Endothelial cell of umbilical vein (primary cell): ENCODE measurements at regions of chr7 and their contacts with region 1.

Region 1: GRCh38 chr7:54788664-54789063 is 29.7 kb upstream of the SEC61G start:
- DNase-seq: peak; percentile 78
- H3K4me3 ChIP-seq: no peak overlapping the region
- H3K27ac ChIP-seq: no peak overlapping the region
- H3K4me1 ChIP-seq: no peaks in the 10 kb centered on the region
- H3K27me3 ChIP-seq: peaks cover 9 to 23% of the 10 kb centered on the region in 2 experiments
- CTCF ChIP-seq: peak; percentile 58 to 64
- POLR2A ChIP-seq: no peak

Region 2: GRCh38 chr7:54811041-54811845 is 22.6 kb after region 1 on chr7:
- CTCF ChIA-PET with region 1: interaction called, 3 read pairs
- POLR2A ChIA-PET with region 1: no interaction called
- dilution Hi-C with region 1: no loop called
- intact Hi-C with region 1: loop called (anchors 1 kb)
- DNase-seq: peak; percentile 78
- H3K4me3 ChIP-seq: peak overlapping the region in 1 of 3 experiments; percentile 12
- H3K27ac ChIP-seq: no peak overlapping the region
- H3K4me1 ChIP-seq: peaks cover 22% of the 10 kb centered on the region
- H3K27me3 ChIP-seq: peaks cover 12 to 14% of the 10 kb centered on the region in 2 experiments
- CTCF ChIP-seq: no peak
- POLR2A ChIP-seq: no peak

Region 3: GRCh38 chr7:54839538-54840213 is 51.0 kb after region 1 on chr7:
- CTCF ChIA-PET with region 1: interaction called, 49 read pairs
- POLR2A ChIA-PET with region 1: no interaction called
- dilution Hi-C with region 1: no loop called
- intact Hi-C with region 1: loop called (anchors 1 kb)
- DNase-seq: peak; percentile 43
- H3K4me3 ChIP-seq: no peak overlapping the region
- H3K27ac ChIP-seq: no peak overlapping the region
- H3K4me1 ChIP-seq: no peaks in the 10 kb centered on the region
- H3K27me3 ChIP-seq: peaks cover 10% of the 10 kb centered on the region in 2 experiments
- CTCF ChIP-seq: peak; percentile 68 to 78
- POLR2A ChIP-seq: no peak

Region 4: GRCh38 chr7:55018361-55019190 is 229.9 kb after region 1 on chr7 and contains the start of gene EGFR:
- CTCF ChIA-PET with region 1: interaction called, 10 read pairs
- POLR2A ChIA-PET with region 1: no interaction called
- dilution Hi-C with region 1: no loop called
- intact Hi-C with region 1: loop called (anchors 10 kb)
- DNase-seq: peak; percentile 64
- H3K4me3 ChIP-seq: peak within 1 kb of the TSS; percentile 69 to 84 (median 74)
- H3K27ac ChIP-seq: peak within 1 kb of the TSS; percentile 40
- H3K4me1 ChIP-seq: peaks cover 10% of the 10 kb centered on the region
- H3K27me3 ChIP-seq: peaks cover 17 to 29% of the 10 kb centered on the region in 2 experiments
- CTCF ChIP-seq: no peak
- POLR2A ChIP-seq: no peak
- total RNA-seq, gene EGFR: 4.1 and 5.0 TPM in 2 replicates

Region 5: GRCh38 chr7:55250313-55250712 is 461.6 kb after region 1 on chr7:
- CTCF ChIA-PET with region 1: interaction called, 406 read pairs
- POLR2A ChIA-PET with region 1: no interaction called
- dilution Hi-C with region 1: no loop called
- intact Hi-C with region 1: loop called (anchors 1 kb)
- DNase-seq: peak; percentile 27
- H3K4me3 ChIP-seq: no peak overlapping the region
- H3K27ac ChIP-seq: no peak overlapping the region
- H3K4me1 ChIP-seq: peaks cover 8% of the 10 kb centered on the region
- H3K27me3 ChIP-seq: peaks cover 27 to 33% of the 10 kb centered on the region in 2 experiments
- CTCF ChIP-seq: peak; percentile 73 to 75
- POLR2A ChIP-seq: no peak

Region 6: DNA sequence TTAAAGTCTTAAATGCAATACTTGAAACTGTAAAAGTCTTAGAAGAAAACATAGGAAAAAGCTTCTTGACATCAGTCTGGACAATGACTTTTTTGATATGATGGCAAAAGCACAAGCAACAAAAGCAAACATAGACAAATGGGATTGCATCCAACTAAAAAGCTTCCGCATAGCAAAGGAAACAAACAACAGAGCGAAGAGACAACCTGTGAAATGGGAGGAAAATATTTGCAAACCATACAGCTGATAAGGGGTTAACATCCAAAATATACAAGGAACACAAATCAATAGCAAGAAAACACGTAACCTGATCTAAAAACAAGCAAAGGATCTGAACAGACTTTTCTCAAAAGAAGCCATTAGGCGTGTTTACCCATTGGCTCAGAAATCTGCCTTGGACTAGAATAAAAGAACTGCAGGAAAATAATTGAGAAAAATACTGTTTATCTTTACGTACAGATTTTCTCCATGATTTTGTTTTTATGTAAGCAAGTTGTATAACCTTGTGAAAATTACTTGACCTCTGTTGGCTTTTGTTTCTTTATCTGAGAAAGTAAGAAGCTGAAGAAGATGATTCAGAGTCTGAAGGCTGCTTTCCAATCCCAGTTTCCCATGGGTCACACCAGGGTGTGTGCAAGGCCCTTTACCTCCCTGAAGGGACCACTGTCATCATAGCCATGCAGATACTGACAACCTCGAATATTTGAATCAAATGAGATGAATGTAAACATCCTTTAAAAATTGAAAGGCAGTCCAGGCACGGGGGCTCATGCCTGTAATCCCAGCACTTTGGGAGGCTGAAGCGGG is 477.4 kb after region 1 on chr7:
- CTCF ChIA-PET with region 1: interaction called, 17 read pairs
- POLR2A ChIA-PET with region 1: no interaction called
- dilution Hi-C with region 1: no loop called
- intact Hi-C with region 1: no loop called
- DNase-seq: no peak
- H3K4me3 ChIP-seq: no peak overlapping the region
- H3K27ac ChIP-seq: no peak overlapping the region
- H3K4me1 ChIP-seq: no peaks in the 10 kb centered on the region
- H3K27me3 ChIP-seq: peaks cover 8 to 20% of the 10 kb centered on the region in 2 experiments
- CTCF ChIP-seq: no peak
- POLR2A ChIP-seq: no peak

Region 7: DNA sequence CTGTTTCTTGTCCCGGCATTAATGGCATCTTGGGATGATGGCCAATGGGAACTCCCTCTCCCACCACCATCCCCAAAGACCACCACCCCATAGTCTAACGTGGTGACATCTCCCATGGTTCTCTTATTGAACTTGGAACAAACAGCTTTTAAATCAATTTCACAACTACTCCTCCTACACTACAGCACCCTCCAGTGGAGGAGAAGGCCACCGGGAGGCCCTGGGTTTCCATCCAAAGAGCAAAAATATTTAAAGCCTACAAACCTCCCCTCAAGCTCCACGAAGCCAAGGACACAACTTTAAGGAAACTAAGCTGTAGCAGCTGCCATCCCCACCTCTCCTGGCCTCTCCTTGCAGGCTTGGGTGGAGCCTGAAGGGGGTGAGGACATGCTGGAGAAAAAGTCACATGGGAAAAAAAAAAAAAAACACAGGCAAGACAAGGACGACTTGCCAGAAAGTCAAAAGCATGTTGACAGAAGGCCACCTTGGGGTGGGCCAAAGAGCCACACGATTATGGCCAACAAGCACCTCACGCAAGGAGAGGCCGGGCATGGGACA is 482.5 kb after region 1 on chr7:
- CTCF ChIA-PET with region 1: interaction called, 17 read pairs
- POLR2A ChIA-PET with region 1: no interaction called
- dilution Hi-C with region 1: no loop called
- intact Hi-C with region 1: no loop called
- DNase-seq: no peak
- H3K4me3 ChIP-seq: no peak overlapping the region
- H3K27ac ChIP-seq: no peak overlapping the region
- H3K4me1 ChIP-seq: no peaks in the 10 kb centered on the region
- H3K27me3 ChIP-seq: peaks cover 4 to 5% of the 10 kb centered on the region in 2 experiments
- CTCF ChIP-seq: peak; percentile 16 to 22
- POLR2A ChIP-seq: no peak